ENCODE measurements at regions of chr18 and their contacts with region 1.

Region 1: GRCh38 chr18:64037812-64038414 is 68.0 kb downstream of the SERPINB8 start:
- ATAC-seq: peak in 3 of 8 experiments; percentile 29 to 44 (median 35)
- H3K4me3 ChIP-seq: no peak overlapping the region
- H3K27ac ChIP-seq: no peak overlapping the region
- H3K4me1 ChIP-seq: no peaks in the 10 kb centered on the region

Region 2: GRCh38 chr18:64409511-64409910 is 371.6 kb after region 1 on chr18:
- in situ Hi-C with region 1: loop called in 1 of 9 experiments (anchors 25 kb)
- ATAC-seq: peak in 1 of 8 experiments; percentile 28
- H3K4me3 ChIP-seq: no peak overlapping the region
- H3K27ac ChIP-seq: no peak overlapping the region
- H3K4me1 ChIP-seq: no peaks in the 10 kb centered on the region

Region 3: GRCh38 chr18:65753520-65753919 is 1715.6 kb after region 1 on chr18:
- in situ Hi-C with region 1: loop called in 1 of 9 experiments (anchors 25 kb)
- ATAC-seq: peak in 6 of 8 experiments; percentile 32 to 79 (median 40)
- H3K4me3 ChIP-seq: peak overlapping the region in 4 of 5 donors; percentile 59 to 96 (median 74)
- H3K27ac ChIP-seq: no peak overlapping the region
- H3K4me1 ChIP-seq: peaks cover 4 to 17% of the 10 kb centered on the region in 2 donors

Measured in motor neuron (in vitro differentiated cells).